ENCODE measurements at regions of chr9 and their contacts with region 1.

Region 1: GRCh38 chr9:98263482-98264357 is 8.3 kb upstream of the TBC1D2 start:
- DNase-seq: peak; percentile 85 to 88
- H3K4me3 ChIP-seq: no peak overlapping the region
- H3K27ac ChIP-seq: no peak overlapping the region
- H3K4me1 ChIP-seq: no peaks in the 10 kb centered on the region
- H3K27me3 ChIP-seq: no peaks in the 10 kb centered on the region
- CTCF ChIP-seq: peak; percentile 78 to 96 (median 92)
- POLR2A ChIP-seq: no peak

Region 2: GRCh38 chr9:98034593-98035546 is 228.8 kb before region 1 on chr9:
- intact Hi-C with region 1: no loop called
- DNase-seq: peak; percentile 86 to 90
- H3K4me3 ChIP-seq: no peak overlapping the region
- H3K27ac ChIP-seq: no peak overlapping the region
- H3K4me1 ChIP-seq: peaks cover 0 to 18% of the 10 kb centered on the region in 2 donors
- H3K27me3 ChIP-seq: no peaks in the 10 kb centered on the region
- CTCF ChIP-seq: peak; percentile 60 to 84 (median 74)
- POLR2A ChIP-seq: no peak

Region 3: DNA sequence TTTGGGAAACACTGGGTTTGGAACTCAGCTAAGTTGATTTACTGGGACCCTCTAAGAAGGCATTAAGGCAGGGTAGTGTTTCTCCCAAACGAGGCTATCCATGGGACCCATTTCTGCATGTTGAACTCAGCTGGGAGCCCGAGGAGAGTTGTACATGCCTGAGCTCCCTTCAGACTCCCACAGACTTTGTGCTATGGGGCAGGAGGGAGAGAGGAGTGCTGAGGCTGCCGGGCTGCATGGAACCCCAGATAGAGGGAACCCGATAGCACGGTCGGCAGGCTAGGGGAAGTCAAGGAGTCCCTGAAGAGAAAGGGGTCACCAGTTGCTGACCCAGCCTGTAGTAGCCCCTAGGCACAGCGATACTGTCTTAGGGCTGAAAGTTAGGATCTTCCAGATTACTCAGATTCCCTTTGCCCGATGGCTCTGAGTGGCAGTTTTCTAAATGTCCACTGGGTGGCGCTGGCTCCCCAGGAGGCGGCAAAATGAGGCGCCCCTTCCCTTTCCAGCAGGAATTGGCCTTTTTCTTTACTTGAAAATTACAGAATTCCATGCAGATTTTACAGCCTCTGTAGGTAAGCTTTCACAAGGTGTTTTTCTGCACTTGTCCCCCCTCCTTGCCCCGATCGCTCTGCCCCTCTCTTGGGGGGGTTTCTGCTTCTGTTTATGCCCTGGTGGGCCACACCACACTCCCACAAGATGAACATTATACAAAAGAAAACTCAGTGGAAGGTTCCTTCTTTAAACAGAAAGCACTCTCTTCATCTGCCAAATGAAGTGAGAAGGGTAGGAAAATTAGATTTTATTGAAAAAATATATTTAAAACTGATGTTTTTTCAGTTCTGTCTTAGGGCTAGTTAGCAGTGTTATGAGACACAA is 189.4 kb before region 1 on chr9:
- intact Hi-C with region 1: loop called (anchors 5 kb)
- DNase-seq: peak; percentile 61 to 69
- H3K4me3 ChIP-seq: no peak overlapping the region
- H3K27ac ChIP-seq: no peak overlapping the region
- H3K4me1 ChIP-seq: peaks cover 0 to 7% of the 10 kb centered on the region in 2 donors
- H3K27me3 ChIP-seq: no peaks in the 10 kb centered on the region
- CTCF ChIP-seq: peak; percentile 79 to 97 (median 91)
- POLR2A ChIP-seq: no peak

Region 4: GRCh38 chr9:98207606-98208005 is 56.1 kb before region 1 on chr9:
- intact Hi-C with region 1: loop called (anchors 2 kb)
- DNase-seq: no peak
- H3K4me3 ChIP-seq: no peak overlapping the region
- H3K27ac ChIP-seq: no peak overlapping the region
- H3K4me1 ChIP-seq: peaks cover 0 to 5% of the 10 kb centered on the region in 2 donors
- H3K27me3 ChIP-seq: no peaks in the 10 kb centered on the region
- CTCF ChIP-seq: no peak
- POLR2A ChIP-seq: no peak

Measured in thyroid gland (tissue), 4 donors.